Endothelial cell of umbilical vein (primary cell): ENCODE measurements at regions of chr6 and their contacts with region 1.

Region 1: GRCh38 chr6:74137911-74138310 is 441.9 kb downstream of the CD109 start:
- DNase-seq: peak; percentile 98
- H3K4me3 ChIP-seq: no peak overlapping the region
- H3K27ac ChIP-seq: peak overlapping the region; percentile 72
- H3K4me1 ChIP-seq: peaks cover 26% of the 10 kb centered on the region
- H3K27me3 ChIP-seq: no peaks in the 10 kb centered on the region
- CTCF ChIP-seq: no peak
- POLR2A ChIP-seq: no peak

Region 2: DNA sequence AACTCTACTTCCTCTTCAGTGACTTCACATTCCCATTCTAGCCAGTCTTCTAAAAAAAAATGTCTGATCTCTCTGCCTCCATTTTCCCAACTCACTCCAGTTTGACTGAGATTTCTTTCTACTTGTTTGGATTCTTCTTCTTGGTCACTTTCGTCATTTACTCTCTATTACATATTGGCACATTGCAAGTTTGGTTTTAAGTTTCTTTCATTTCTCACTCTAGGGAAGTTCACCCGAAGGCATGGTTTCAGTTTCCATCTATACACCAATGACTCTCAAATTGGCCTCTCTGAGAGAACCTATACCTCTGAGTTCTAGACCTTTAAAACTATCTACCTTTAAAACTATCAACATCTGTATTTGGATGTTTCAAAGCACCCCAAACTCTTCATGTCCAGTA is 390.6 kb before region 1 on chr6:
- CTCF ChIA-PET with region 1: no interaction called
- POLR2A ChIA-PET with region 1: no interaction called
- dilution Hi-C with region 1: no loop called
- intact Hi-C with region 1: no loop called
- DNase-seq: no peak
- H3K4me3 ChIP-seq: no peak overlapping the region
- H3K27ac ChIP-seq: no peak overlapping the region
- H3K4me1 ChIP-seq: no peaks in the 10 kb centered on the region
- H3K27me3 ChIP-seq: no peaks in the 10 kb centered on the region
- CTCF ChIP-seq: no peak
- POLR2A ChIP-seq: no peak

Region 3: DNA sequence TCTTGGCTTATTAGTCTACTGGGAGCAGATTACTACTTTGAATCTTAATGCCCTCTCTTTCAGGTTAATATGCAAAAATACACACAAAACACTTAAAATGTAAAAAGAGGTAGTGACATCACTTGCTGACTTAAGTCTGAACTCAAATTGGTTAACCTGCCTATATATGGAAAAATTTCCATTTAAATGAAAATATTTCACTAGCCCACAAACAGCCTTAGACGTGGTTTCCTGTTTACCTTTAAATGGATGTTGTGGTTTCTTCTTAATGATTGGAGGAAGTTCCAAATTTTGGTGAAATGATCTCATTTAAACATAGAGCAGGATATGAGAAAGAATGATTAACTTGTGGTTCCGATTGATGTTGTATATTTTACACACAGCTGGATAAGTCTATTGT is 111.7 kb after region 1 on chr6:
- CTCF ChIA-PET with region 1: no interaction called
- POLR2A ChIA-PET with region 1: no interaction called
- dilution Hi-C with region 1: no loop called
- intact Hi-C with region 1: loop called (anchors 5 kb)
- DNase-seq: peak; percentile 37
- H3K4me3 ChIP-seq: no peak overlapping the region
- H3K27ac ChIP-seq: peak overlapping the region; percentile 69
- H3K4me1 ChIP-seq: peaks cover 25% of the 10 kb centered on the region
- H3K27me3 ChIP-seq: no peaks in the 10 kb centered on the region
- CTCF ChIP-seq: no peak
- POLR2A ChIP-seq: no peak

Region 4: GRCh38 chr6:74568861-74569260 is 430.9 kb after region 1 on chr6:
- CTCF ChIA-PET with region 1: no interaction called
- POLR2A ChIA-PET with region 1: no interaction called
- dilution Hi-C with region 1: no loop called
- intact Hi-C with region 1: loop called (anchors 5 kb)
- DNase-seq: peak; percentile 87
- H3K4me3 ChIP-seq: peak overlapping the region in 1 of 3 experiments; percentile 21
- H3K27ac ChIP-seq: peak overlapping the region; percentile 88
- H3K4me1 ChIP-seq: peaks cover 21% of the 10 kb centered on the region
- H3K27me3 ChIP-seq: no peaks in the 10 kb centered on the region
- CTCF ChIP-seq: no peak
- POLR2A ChIP-seq: no peak

Region 5: DNA sequence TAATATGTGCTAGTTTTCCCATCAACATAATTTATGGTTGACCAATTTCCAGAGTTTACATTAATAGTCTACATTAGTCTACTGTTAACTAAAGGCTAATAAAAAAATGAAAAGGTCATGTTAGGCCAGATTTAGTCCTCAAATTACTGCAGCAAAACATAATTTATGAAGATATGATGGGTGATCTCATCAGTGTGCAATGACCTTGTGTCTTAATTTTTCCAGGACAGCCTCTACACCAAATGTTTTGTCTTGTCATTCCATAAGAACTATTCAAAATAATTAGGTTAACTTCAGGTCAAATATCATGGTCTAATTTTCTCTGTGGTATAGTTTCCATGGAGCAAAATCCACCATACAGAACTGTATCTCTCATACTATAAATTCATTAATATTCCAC is 833.7 kb after region 1 on chr6:
- CTCF ChIA-PET with region 1: no interaction called
- POLR2A ChIA-PET with region 1: no interaction called
- dilution Hi-C with region 1: no loop called
- intact Hi-C with region 1: loop called (anchors 5 kb)
- DNase-seq: peak; percentile 5
- H3K4me3 ChIP-seq: no peak overlapping the region
- H3K27ac ChIP-seq: no peak overlapping the region
- H3K4me1 ChIP-seq: peaks cover 18% of the 10 kb centered on the region
- H3K27me3 ChIP-seq: no peaks in the 10 kb centered on the region
- CTCF ChIP-seq: no peak
- POLR2A ChIP-seq: no peak